ENCODE measurements at regions of chr9 and their contacts with region 1.

Region 1: GRCh38 chr9:125143375-125144090 is at the start of gene SCAI:
- DNase-seq: peak; percentile 95
- ATAC-seq: peak; percentile 99
- H3K4me3 ChIP-seq: peak within 1 kb of the TSS; percentile 67
- H3K27ac ChIP-seq: peak within 1 kb of the TSS; percentile 6; the same call in 1 of the 2 replicates
- H3K4me1 ChIP-seq: peaks cover 10% of the 10 kb centered on the region
- H3K27me3 ChIP-seq: no peaks in the 10 kb centered on the region
- CTCF ChIP-seq: peak; percentile 96 to 99 (median 97)
- EP300 ChIP-seq: no peak; a peak in 1 of 4 replicates
- POLR2A ChIP-seq: peak; percentile 75
- RAD21 ChIP-seq: peak; percentile 72
- polyA plus RNA-seq, gene SCAI: 0.52 to 0.82 TPM

Region 2: GRCh38 chr9:124868511-124869465 is 274.7 kb before region 1 on chr9:
- CTCF ChIA-PET with region 1: interaction called, 6 read pairs
- POLR2A ChIA-PET with region 1: interaction called, 3 read pairs
- RAD21 ChIA-PET with region 1: interaction called, 7 read pairs
- SMC1A ChIA-PET with region 1: interaction called, 4 read pairs
- in situ Hi-C with region 1: no loop called
- intact Hi-C with region 1: loop called (anchors 5 kb)
- DNase-seq: no peak
- ATAC-seq: peak; percentile 75
- H3K4me3 ChIP-seq: peak overlapping the region; percentile 94
- H3K27ac ChIP-seq: peak overlapping the region; percentile 94
- H3K4me1 ChIP-seq: peaks cover 17% of the 10 kb centered on the region
- H3K27me3 ChIP-seq: no peaks in the 10 kb centered on the region
- CTCF ChIP-seq: peak; percentile 31 to 41 (median 40); a peak in 4 of 6 replicates
- EP300 ChIP-seq: no peak
- POLR2A ChIP-seq: peak; percentile 88
- RAD21 ChIP-seq: no peak

Region 3: GRCh38 chr9:124940693-124941453 is 202.7 kb before region 1 on chr9 and contains the start of gene GOLGA1:
- CTCF ChIA-PET with region 1: interaction called, 7 read pairs
- POLR2A ChIA-PET with region 1: no interaction called
- RAD21 ChIA-PET with region 1: interaction called, 4 read pairs
- SMC1A ChIA-PET with region 1: interaction called, 9 read pairs
- in situ Hi-C with region 1: no loop called
- intact Hi-C with region 1: loop called (anchors 1 kb)
- DNase-seq: peak; percentile 79
- ATAC-seq: peak; percentile 90
- H3K4me3 ChIP-seq: peak within 1 kb of the TSS; percentile 86
- H3K27ac ChIP-seq: peak within 1 kb of the TSS; percentile 88
- H3K4me1 ChIP-seq: no peaks in the 10 kb centered on the region
- H3K27me3 ChIP-seq: no peaks in the 10 kb centered on the region
- CTCF ChIP-seq: no peak
- EP300 ChIP-seq: peak in 1 of 2 experiments; percentile 67; a peak in 2 of 4 replicates
- POLR2A ChIP-seq: peak; percentile 96
- RAD21 ChIP-seq: no peak
- polyA plus RNA-seq, gene GOLGA1: 2.9 to 3.0 TPM

Region 4: GRCh38 chr9:125003332-125003731 is 140.2 kb before region 1 on chr9:
- CTCF ChIA-PET with region 1: no interaction called
- POLR2A ChIA-PET with region 1: no interaction called
- RAD21 ChIA-PET with region 1: no interaction called
- SMC1A ChIA-PET with region 1: no interaction called
- in situ Hi-C with region 1: no loop called
- intact Hi-C with region 1: loop called (anchors 10 kb)
- DNase-seq: no peak
- ATAC-seq: no peak
- H3K4me3 ChIP-seq: no peak overlapping the region
- H3K27ac ChIP-seq: no peak overlapping the region
- H3K4me1 ChIP-seq: no peaks in the 10 kb centered on the region
- H3K27me3 ChIP-seq: no peaks in the 10 kb centered on the region
- CTCF ChIP-seq: no peak
- EP300 ChIP-seq: no peak
- POLR2A ChIP-seq: no peak
- RAD21 ChIP-seq: no peak

Region 5: DNA sequence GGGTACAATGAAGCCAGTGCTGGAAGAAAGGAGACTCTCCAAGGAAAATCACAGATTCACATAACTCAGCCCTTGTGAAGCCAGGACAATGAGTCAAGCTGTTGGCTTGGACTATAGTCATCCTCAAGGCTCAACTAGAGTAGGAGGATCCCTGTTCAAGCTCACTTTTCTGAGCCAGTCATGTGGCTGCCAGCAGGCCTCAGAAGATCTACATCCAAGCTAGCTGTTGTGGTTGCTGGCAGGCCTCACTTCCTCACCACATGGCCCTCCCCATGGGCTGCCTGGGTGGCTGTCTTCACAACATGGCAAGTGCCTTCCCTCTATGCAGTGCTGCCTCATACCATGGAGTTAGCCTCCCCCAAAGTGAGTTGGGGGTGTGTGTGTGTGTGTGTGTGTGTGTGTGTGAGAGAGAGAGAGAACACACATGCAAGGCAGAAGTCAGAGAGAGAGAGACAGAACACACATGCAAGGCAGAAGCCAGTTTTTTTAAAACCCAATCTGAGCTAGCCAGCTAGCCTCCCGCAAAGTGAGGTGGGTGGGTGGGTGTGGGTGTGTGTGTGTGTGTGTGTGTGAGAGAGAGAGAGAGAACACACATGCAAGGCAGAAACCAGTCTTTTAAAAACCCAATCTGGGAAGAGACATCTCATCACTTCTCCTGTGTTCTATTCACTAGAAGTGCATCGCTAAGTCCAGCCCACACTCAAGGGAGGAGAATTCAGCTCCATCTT is 17.4 kb before region 1 on chr9:
- CTCF ChIA-PET with region 1: interaction called, 14 read pairs
- POLR2A ChIA-PET with region 1: interaction called, 6 read pairs
- RAD21 ChIA-PET with region 1: interaction called, 8 read pairs
- SMC1A ChIA-PET with region 1: interaction called, 19 read pairs
- in situ Hi-C with region 1: no loop called
- intact Hi-C with region 1: no loop called
- DNase-seq: peak; percentile 50
- ATAC-seq: peak; percentile 100
- H3K4me3 ChIP-seq: no peak overlapping the region
- H3K27ac ChIP-seq: 0 out of 2 replicates have a peak overlapping the region, but pooled peaks have one; percentile 6
- H3K4me1 ChIP-seq: 0 out of 2 replicates have a peak, but pooled peaks cover 2% of the 10 kb centered on the region
- H3K27me3 ChIP-seq: no peaks in the 10 kb centered on the region
- CTCF ChIP-seq: no peak
- EP300 ChIP-seq: 0 out of 4 replicates have a peak, but pooled peaks of 1 of the 2 experiments have one; percentile 10
- POLR2A ChIP-seq: peak; percentile 55
- RAD21 ChIP-seq: no peak

Region 6: GRCh38 chr9:125325831-125326230 is 182.3 kb after region 1 on chr9:
- CTCF ChIA-PET with region 1: no interaction called
- POLR2A ChIA-PET with region 1: no interaction called
- RAD21 ChIA-PET with region 1: no interaction called
- SMC1A ChIA-PET with region 1: no interaction called
- in situ Hi-C with region 1: no loop called
- intact Hi-C with region 1: no loop called
- DNase-seq: no peak
- ATAC-seq: no peak
- H3K4me3 ChIP-seq: no peak overlapping the region
- H3K27ac ChIP-seq: no peak overlapping the region
- H3K4me1 ChIP-seq: no peaks in the 10 kb centered on the region
- H3K27me3 ChIP-seq: no peaks in the 10 kb centered on the region
- CTCF ChIP-seq: no peak
- EP300 ChIP-seq: no peak
- POLR2A ChIP-seq: no peak
- RAD21 ChIP-seq: no peak

Region 7: GRCh38 chr9:125374443-125375309 is 231.1 kb after region 1 on chr9:
- CTCF ChIA-PET with region 1: no interaction called
- POLR2A ChIA-PET with region 1: no interaction called
- RAD21 ChIA-PET with region 1: no interaction called
- SMC1A ChIA-PET with region 1: no interaction called
- in situ Hi-C with region 1: no loop called
- intact Hi-C with region 1: loop called (anchors 5 kb)
- DNase-seq: peak; percentile 16
- ATAC-seq: peak; percentile 98
- H3K4me3 ChIP-seq: no peak overlapping the region
- H3K27ac ChIP-seq: no peak overlapping the region
- H3K4me1 ChIP-seq: 0 out of 2 replicates have a peak, but pooled peaks cover 3% of the 10 kb centered on the region
- H3K27me3 ChIP-seq: peaks cover 0 to 2% of the 10 kb centered on the region in 2 experiments; a peak in 1 of 4 replicates
- CTCF ChIP-seq: peak; percentile 82 to 87 (median 83)
- EP300 ChIP-seq: no peak
- POLR2A ChIP-seq: no peak
- RAD21 ChIP-seq: peak; percentile 100

Region 8: DNA sequence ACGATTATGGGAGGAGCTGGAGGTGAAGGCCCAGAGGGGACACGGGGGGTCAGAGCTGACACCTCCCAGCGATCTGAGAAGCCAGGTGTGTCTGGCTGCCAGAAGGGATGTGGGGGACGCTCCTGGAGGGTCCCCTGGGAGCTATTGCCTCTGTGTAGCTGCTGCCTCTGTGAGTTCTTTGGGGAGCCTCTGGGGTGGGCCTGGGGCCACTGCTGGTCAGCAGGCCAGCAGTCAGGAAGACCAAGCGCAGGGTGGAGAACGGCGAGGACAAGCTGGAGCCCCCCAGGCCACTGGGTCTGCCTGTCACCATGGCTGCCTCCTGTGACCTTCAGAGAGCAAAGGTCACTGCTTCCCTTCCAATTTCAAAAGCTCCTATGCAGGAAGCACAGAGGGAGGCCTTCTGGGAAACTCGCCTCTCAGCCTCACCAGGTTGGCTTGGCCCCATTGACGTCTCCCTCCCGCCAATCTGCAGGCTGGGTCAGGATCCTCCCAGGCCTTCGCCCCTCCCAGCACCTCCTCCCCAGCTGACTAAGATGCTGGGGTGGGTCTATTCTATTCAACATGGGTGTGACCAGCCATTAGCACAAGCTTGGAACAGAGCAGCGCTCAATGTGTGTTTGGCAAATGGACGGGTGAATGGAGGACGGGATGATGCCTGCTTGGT is 244.5 kb after region 1 on chr9:
- CTCF ChIA-PET with region 1: no interaction called
- POLR2A ChIA-PET with region 1: no interaction called
- RAD21 ChIA-PET with region 1: no interaction called
- SMC1A ChIA-PET with region 1: no interaction called
- in situ Hi-C with region 1: no loop called
- intact Hi-C with region 1: no loop called
- DNase-seq: no peak
- ATAC-seq: no peak
- H3K4me3 ChIP-seq: no peak overlapping the region
- H3K27ac ChIP-seq: no peak overlapping the region
- H3K4me1 ChIP-seq: no peaks in the 10 kb centered on the region
- H3K27me3 ChIP-seq: no peaks in the 10 kb centered on the region
- CTCF ChIP-seq: no peak
- EP300 ChIP-seq: no peak
- POLR2A ChIP-seq: no peak
- RAD21 ChIP-seq: no peak